Uterus (tissue), 4 donors: ENCODE measurements at regions of chr2 and their contacts with region 1.

Region 1: DNA sequence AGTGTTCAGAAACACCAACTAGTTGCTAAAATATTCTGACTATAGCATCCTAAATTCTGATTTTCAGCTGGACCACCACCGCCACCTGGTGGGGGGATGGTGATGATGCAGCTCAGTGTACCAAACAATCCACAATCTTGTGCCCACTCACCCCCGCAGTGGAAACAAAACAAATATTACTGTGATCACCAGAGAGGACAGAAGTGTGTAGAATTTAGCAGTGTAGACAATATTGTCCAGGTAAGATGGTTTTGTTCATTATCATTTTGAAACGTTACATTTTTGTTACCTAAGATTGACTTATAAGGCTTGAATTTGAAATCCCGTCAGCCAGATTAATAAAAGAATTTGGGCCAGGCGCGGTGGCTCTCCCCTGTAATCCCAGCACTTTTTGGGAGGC is 31.7 kb upstream of the UBXN4 start:
- DNase-seq: peak; percentile 45 to 59
- H3K4me3 ChIP-seq: no peak overlapping the region
- H3K27ac ChIP-seq: no peak overlapping the region
- H3K4me1 ChIP-seq: no peaks in the 10 kb centered on the region
- H3K27me3 ChIP-seq: no peaks in the 10 kb centered on the region
- CTCF ChIP-seq: peak; percentile 76 to 89 (median 84)
- POLR2A ChIP-seq: no peak

Region 2: DNA sequence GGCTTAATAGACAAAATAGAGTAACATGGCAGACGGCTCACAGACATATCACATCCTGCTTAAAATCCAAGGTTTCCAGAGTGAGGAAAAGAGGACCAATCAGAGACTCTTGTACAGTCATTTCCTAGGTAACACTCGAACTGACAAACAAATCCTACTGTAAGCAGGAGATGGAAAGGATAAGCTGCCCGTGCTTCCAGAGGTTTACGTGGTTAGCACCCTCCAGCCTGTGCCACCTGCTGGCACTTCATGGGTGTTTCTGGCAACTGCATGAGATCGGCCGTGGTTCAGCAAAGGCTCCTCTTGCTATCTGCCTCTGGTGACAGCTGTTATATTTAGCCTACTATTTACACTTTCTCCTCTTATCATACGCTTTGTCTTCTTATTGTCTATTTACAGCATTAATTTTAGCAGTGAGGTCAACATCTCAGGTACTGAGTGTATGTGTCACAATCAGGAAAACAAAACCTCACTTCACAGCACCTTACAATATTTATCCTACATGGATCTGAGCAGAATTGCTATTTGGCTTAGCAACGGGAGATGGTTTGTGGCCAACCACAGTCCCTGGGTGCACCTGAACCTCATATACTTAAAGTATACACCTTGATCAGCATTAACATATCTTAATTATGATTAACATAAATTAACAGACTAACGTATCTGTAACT is 1218.1 kb before region 1 on chr2:
- intact Hi-C with region 1: no loop called
- DNase-seq: no peak
- H3K4me3 ChIP-seq: no peak overlapping the region
- H3K27ac ChIP-seq: no peak overlapping the region
- H3K4me1 ChIP-seq: no peaks in the 10 kb centered on the region
- H3K27me3 ChIP-seq: no peaks in the 10 kb centered on the region
- CTCF ChIP-seq: no peak
- POLR2A ChIP-seq: no peak

Region 3: GRCh38 chr2:135004005-135004746 is 705.8 kb before region 1 on chr2:
- intact Hi-C with region 1: loop called (anchors 10 kb)
- DNase-seq: peak; percentile 42 to 71
- H3K4me3 ChIP-seq: no peak overlapping the region
- H3K27ac ChIP-seq: no peak overlapping the region
- H3K4me1 ChIP-seq: no peaks in the 10 kb centered on the region
- H3K27me3 ChIP-seq: no peaks in the 10 kb centered on the region
- CTCF ChIP-seq: peak; percentile 81 to 91 (median 86)
- POLR2A ChIP-seq: no peak